H1 (cell line): ENCODE measurements at regions of chr7 and their contacts with region 1.

Region 1: GRCh38 chr7:74272305-74273038 is 16.7 kb upstream of the CLIP2 start:
- DNase-seq: no peak
- H3K4me3 ChIP-seq: no peak overlapping the region
- H3K27ac ChIP-seq: no peak overlapping the region
- H3K4me1 ChIP-seq: peaks cover 0 to 10% (median 7%) of the 10 kb centered on the region in 4 experiments; a peak in 6 of 7 replicates
- H3K27me3 ChIP-seq: no peaks in the 10 kb centered on the region; a peak in 1 of 7 replicates
- CTCF ChIP-seq: no peak
- EP300 ChIP-seq: no peak
- POLR2A ChIP-seq: no peak
- RAD21 ChIP-seq: no peak

Region 2: DNA sequence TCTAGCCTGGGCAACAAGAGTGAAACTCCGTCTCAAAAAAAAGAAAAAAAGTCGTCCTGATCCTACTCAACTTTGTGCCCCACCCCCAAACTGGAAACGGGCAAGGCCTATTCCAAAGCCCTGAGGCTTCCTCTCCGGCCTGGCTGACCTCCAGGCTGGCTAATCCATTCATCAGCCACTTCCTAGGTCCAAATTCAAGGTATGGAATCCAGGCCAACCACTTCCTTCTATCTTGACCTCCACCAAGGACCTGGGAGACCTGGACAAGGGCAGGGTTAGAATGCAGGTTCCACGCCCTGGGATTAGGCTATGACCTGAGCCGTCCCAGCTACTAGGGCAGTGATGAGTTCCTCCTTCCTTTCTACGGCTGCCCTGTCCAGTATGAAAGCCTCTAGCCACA is 118.7 kb before region 1 on chr7:
- CTCF ChIA-PET with region 1: no interaction called
- POLR2A ChIA-PET with region 1: no interaction called
- DNase-seq: no peak
- H3K4me3 ChIP-seq: no peak overlapping the region
- H3K27ac ChIP-seq: no peak overlapping the region
- H3K4me1 ChIP-seq: no peaks in the 10 kb centered on the region
- H3K27me3 ChIP-seq: no peaks in the 10 kb centered on the region
- CTCF ChIP-seq: no peak
- EP300 ChIP-seq: no peak
- POLR2A ChIP-seq: no peak
- RAD21 ChIP-seq: no peak

Region 3: DNA sequence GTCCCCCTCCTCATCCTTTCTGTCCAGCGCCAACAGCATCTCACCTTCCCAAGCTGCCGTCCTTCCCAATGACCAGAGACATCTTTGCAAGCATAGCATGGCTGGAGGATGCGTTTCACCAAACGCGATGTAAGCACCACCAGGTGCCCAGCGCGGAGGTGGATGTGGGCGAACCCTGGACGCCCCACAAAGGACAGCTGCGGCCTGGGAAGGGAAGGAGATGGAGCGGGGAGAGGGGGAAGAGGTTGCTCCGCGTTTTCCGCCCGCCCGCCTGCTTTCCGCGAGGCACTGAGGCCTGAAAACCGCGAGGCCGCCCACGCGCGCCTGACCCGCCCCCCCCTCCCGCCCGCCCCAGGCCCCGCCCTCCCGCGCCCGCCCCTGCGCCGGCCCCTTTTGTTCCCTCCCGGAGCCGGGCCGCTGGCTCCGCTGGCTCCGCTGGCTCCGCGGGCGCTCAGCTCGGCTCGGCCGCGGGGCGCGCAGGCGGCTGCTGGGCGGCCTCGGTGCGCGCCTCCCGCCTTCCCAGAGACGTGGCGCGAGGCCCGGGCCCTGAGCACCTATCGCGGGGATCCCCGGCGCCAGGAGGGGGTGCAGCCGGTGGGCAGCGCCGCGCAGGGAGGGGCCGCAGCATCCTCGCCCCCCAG is 16.7 kb after region 1 on chr7 and contains the start of gene CLIP2:
- CTCF ChIA-PET with region 1: interaction called, 75 read pairs
- POLR2A ChIA-PET with region 1: interaction called, 97 read pairs
- DNase-seq: peak in 1 of 2 experiments; percentile 82
- H3K4me3 ChIP-seq: peak within 1 kb of the TSS; percentile 79 to 97 (median 84)
- H3K27ac ChIP-seq: no peak within 1 kb of the TSS
- H3K4me1 ChIP-seq: peaks cover 9 to 44% (median 29%) of the 10 kb centered on the region in 4 experiments
- H3K27me3 ChIP-seq: peaks cover 0 to 4% (median 0%) of the 10 kb centered on the region in 4 experiments; a peak in 3 of 7 replicates
- CTCF ChIP-seq: no peak
- EP300 ChIP-seq: no peak
- POLR2A ChIP-seq: peak in 1 of 2 experiments; percentile 34; a peak in 1 of 3 replicates
- RAD21 ChIP-seq: no peak; a peak in 1 of 4 replicates
- total RNA-seq, gene CLIP2: 39.8 and 41.5 TPM in 2 replicates

Region 4: DNA sequence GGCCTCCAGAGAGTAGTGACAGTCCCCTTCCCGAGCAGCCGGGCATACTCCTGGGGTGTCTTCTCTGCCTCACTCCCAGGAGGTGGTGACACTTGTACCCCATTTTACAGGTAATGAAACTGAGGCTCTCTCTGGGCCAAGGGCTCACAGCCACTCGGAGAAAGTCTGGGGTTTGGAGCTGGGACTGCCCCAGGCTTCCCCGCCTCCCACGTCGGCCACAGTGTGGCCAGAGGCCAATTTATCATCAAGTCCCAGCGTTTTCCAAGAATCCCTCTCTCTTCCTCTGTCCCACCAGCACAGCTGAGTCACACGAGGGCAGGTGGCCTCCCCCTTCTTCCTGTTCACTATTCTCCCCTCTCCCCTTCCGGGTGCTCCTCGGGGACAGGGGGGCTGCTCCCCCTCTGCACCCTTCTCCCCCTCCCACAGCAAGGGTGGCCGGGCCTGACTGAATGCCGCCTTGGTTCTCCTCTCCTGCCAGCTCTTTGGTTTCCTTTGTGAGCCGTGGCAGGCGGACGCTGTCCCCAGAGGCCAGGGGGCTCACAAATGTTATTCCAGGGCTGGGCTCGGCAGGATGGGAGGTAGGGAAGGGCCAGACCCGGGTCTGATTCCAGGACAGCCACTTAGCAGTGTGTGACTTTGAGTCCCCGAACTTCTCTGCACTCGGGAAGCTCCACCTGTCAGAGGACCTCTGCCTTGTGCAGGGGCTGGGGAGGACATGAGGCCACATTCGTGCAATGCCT is 34.4 kb after region 1 on chr7:
- CTCF ChIA-PET with region 1: interaction called, 11 read pairs
- POLR2A ChIA-PET with region 1: no interaction called
- DNase-seq: no peak
- H3K4me3 ChIP-seq: no peak overlapping the region
- H3K27ac ChIP-seq: no peak overlapping the region
- H3K4me1 ChIP-seq: no peaks in the 10 kb centered on the region; a peak in 3 of 7 replicates
- H3K27me3 ChIP-seq: no peaks in the 10 kb centered on the region
- CTCF ChIP-seq: no peak
- EP300 ChIP-seq: no peak
- POLR2A ChIP-seq: no peak
- RAD21 ChIP-seq: no peak

Region 5: GRCh38 chr7:74325210-74325565 is 52.7 kb after region 1 on chr7:
- CTCF ChIA-PET with region 1: no interaction called
- POLR2A ChIA-PET with region 1: no interaction called
- DNase-seq: no peak
- H3K4me3 ChIP-seq: no peak overlapping the region
- H3K27ac ChIP-seq: peak overlapping the region; percentile 15; the same call in 1 of the 2 replicates
- H3K4me1 ChIP-seq: peaks cover 0 to 6% (median 2%) of the 10 kb centered on the region in 4 experiments; a peak in 2 of 7 replicates
- H3K27me3 ChIP-seq: no peaks in the 10 kb centered on the region
- CTCF ChIP-seq: no peak
- EP300 ChIP-seq: no peak
- POLR2A ChIP-seq: no peak
- RAD21 ChIP-seq: no peak

Region 6: DNA sequence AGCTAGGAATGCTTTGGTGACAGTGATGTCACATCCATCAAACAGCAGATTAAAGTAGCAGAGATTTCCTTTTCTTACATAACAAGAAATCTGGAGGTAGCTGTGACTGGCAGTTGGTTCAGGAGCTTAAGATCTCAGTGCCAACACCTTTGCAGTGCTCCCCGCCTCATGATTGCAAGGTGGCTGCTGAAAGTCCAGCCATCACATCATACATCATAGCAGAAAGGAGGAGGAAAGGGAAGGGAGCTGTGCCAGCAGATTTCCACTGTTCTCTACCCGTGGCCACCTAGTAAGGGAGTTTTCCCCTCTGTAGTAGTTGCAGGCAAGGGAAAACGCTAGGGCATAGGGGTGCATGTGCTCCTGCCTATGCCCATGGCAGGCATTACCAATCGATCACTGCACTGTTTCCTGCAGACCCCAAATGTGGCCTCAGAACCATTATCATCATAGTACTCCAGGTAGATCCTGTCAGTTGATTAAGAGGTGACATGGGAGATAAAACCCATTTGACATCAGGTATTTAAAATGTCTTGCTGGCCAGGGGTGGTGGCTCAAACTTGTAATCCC is 123.4 kb after region 1 on chr7:
- CTCF ChIA-PET with region 1: interaction called, 25 read pairs
- POLR2A ChIA-PET with region 1: no interaction called
- DNase-seq: no peak
- H3K4me3 ChIP-seq: no peak overlapping the region
- H3K27ac ChIP-seq: no peak overlapping the region
- H3K4me1 ChIP-seq: peaks cover 0 to 4% (median 0%) of the 10 kb centered on the region in 4 experiments; a peak in 1 of 7 replicates
- H3K27me3 ChIP-seq: no peaks in the 10 kb centered on the region
- CTCF ChIP-seq: no peak
- EP300 ChIP-seq: no peak
- POLR2A ChIP-seq: no peak
- RAD21 ChIP-seq: no peak